ENCODE measurements at regions of chr3 and their contacts with region 1.

Region 1: GRCh38 chr3:48439820-48440589 is at the starts of genes CCDC51 and TMA7:
- DNase-seq: peak; percentile 97 to 98 (median 97)
- H3K4me3 ChIP-seq: peak within 1 kb of the TSS; percentile 71 to 99 (median 87)
- H3K27ac ChIP-seq: peak within 1 kb of the TSS; percentile 74 to 88
- H3K4me1 ChIP-seq: peaks cover 8 to 37% (median 22%) of the 10 kb centered on the region in 4 experiments
- H3K27me3 ChIP-seq: no peaks in the 10 kb centered on the region

Region 2: GRCh38 chr3:48268381-48269183 is 171.4 kb before region 1 on chr3:
- CTCF ChIA-PET with region 1: interaction called, 164 read pairs
- POLR2A ChIA-PET with region 1: interaction called, 3 read pairs
- DNase-seq: no peak
- H3K4me3 ChIP-seq: no peak overlapping the region
- H3K27ac ChIP-seq: no peak overlapping the region
- H3K4me1 ChIP-seq: no peaks in the 10 kb centered on the region
- H3K27me3 ChIP-seq: no peaks in the 10 kb centered on the region

Region 3: GRCh38 chr3:48289659-48290058 is 150.3 kb before region 1 on chr3:
- CTCF ChIA-PET with region 1: interaction called, 12 read pairs
- POLR2A ChIA-PET with region 1: no interaction called
- DNase-seq: no peak
- H3K4me3 ChIP-seq: no peak overlapping the region
- H3K27ac ChIP-seq: no peak overlapping the region
- H3K4me1 ChIP-seq: peaks cover 0 to 3% (median under 1%) of the 10 kb centered on the region in 4 experiments
- H3K27me3 ChIP-seq: no peaks in the 10 kb centered on the region

Region 4: GRCh38 chr3:48415554-48415953 is 24.5 kb before region 1 on chr3:
- CTCF ChIA-PET with region 1: interaction called, 35 read pairs
- POLR2A ChIA-PET with region 1: no interaction called
- DNase-seq: no peak
- H3K4me3 ChIP-seq: no peak overlapping the region
- H3K27ac ChIP-seq: no peak overlapping the region
- H3K4me1 ChIP-seq: no peaks in the 10 kb centered on the region
- H3K27me3 ChIP-seq: no peaks in the 10 kb centered on the region

Region 5: DNA sequence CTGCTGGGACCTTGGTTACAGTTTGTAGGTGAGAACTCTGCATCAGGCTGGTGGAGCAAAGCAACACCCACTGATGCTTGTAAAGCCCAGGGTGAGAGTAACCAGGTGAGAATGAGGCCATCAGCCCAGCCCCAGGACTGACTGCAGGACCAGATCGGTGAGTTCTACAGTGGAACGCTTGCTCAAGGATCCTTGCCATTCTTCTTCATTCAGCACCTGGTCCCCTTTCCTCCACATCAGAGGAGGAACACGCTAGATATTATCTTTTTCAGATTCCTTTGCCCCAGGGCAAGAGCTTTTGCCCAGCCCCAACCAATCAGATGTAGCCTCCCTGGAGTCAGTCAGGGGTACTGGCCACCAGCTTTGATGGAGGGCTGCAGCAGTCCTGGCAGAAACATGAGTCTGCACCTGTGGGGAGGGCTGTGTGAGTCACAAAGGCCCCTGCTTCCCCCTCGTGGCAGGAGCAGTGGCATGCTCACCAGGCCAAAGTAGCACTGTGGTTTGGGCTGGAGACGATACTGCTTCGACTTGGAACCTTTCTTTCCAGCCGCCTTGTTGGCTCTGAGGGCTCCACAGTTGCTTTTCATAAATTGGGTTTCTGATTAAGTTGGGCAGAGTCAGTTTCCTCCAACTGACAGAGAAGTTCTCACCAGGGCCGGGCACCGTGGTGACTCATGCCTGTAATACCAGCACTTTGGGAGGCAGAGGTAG is 67.5 kb after region 1 on chr3:
- CTCF ChIA-PET with region 1: interaction called, 19 read pairs
- POLR2A ChIA-PET with region 1: no interaction called
- DNase-seq: peak; percentile 79 to 90 (median 88)
- H3K4me3 ChIP-seq: no peak overlapping the region
- H3K27ac ChIP-seq: no peak overlapping the region
- H3K4me1 ChIP-seq: peaks cover 0 to 32% (median 20%) of the 10 kb centered on the region in 4 experiments
- H3K27me3 ChIP-seq: no peaks in the 10 kb centered on the region

Measured in common myeloid progenitor, CD34-positive (primary cell).